Brain microvascular endothelial cell (primary cell): ENCODE measurements at regions of chrX and their contacts with region 1.

Region 1: DNA sequence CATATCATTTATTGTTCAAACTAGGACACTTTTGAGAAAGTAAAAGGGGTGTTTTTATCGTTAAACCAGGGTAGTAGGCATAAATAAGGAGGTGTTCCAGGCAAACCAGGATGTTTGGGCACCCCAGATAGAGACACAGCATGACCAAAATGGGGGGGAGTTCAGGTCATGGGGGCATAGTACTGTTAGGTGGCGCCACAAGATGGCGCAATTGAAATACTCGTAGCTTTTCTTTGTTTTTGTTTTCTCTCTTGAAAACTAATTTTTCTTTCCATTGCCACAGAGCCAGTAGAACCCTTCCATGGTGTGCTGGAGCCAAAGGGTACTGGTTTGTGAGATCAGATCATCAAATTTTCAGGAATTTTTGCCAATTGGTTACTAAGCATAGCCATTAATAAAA is 283.4 kb downstream of the BCOR start:
- DNase-seq: no peak
- H3K4me3 ChIP-seq: no peak overlapping the region
- H3K27ac ChIP-seq: no peak overlapping the region
- H3K27me3 ChIP-seq: no peaks in the 10 kb centered on the region
- CTCF ChIP-seq: peak; percentile 53

Region 2: GRCh38 chrX:39907964-39908616 is 93.7 kb after region 1 on chrX:
- in situ Hi-C with region 1: loop called (anchors 25 kb)
- DNase-seq: peak; percentile 90
- H3K4me3 ChIP-seq: no peak overlapping the region
- H3K27ac ChIP-seq: peak overlapping the region; percentile 83
- H3K27me3 ChIP-seq: no peaks in the 10 kb centered on the region
- CTCF ChIP-seq: no peak